ENCODE measurements at regions of chr10 and their contacts with region 1.

Region 1: DNA sequence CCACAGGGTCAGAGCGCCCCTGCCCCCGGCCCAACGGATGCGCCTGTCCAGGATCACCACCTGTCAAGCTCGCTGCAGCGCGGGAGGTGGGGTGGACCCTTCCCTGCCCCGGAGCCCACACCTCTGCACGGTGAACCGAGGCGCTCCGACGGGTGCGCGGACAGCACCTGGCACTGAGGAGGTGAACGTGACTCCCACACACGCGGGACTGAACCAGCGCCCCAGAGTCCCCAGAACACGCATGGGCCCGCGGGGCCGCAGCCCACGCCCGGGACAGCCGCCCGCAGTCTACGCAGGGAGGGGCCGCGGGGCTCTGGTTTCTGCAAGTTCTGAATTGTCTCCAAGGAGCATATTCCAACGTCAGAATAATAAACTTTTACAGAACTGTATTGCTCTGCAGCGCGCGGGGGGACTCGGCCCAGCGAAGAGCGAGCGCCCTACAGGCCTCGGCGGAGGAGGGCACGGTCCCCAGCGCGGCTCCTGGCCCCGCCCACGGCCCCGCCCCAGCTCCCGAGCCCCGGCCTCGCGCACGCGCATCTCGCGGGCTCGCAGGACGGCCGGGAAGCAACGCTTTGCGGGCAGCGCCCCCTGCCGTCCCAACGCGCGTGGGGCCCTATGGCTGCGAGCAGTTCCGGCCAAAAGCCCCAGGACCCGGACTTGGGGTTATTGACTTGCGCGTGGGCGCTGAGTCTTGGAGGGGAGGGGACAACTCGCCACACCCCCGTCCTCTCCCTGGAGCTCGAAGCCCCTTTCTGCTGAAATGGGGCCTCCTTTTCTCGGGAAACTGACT is 29.7 kb downstream of the OAT start:
- DNase-seq: peak; percentile 64 to 93
- H3K4me3 ChIP-seq: 0 out of 2 replicates have a peak overlapping the region, but pooled peaks have one; percentile 8
- H3K4me1 ChIP-seq: peaks cover 23% of the 10 kb centered on the region
- H3K27me3 ChIP-seq: 0 out of 2 replicates have a peak, but pooled peaks cover 2% of the 10 kb centered on the region

Region 2: DNA sequence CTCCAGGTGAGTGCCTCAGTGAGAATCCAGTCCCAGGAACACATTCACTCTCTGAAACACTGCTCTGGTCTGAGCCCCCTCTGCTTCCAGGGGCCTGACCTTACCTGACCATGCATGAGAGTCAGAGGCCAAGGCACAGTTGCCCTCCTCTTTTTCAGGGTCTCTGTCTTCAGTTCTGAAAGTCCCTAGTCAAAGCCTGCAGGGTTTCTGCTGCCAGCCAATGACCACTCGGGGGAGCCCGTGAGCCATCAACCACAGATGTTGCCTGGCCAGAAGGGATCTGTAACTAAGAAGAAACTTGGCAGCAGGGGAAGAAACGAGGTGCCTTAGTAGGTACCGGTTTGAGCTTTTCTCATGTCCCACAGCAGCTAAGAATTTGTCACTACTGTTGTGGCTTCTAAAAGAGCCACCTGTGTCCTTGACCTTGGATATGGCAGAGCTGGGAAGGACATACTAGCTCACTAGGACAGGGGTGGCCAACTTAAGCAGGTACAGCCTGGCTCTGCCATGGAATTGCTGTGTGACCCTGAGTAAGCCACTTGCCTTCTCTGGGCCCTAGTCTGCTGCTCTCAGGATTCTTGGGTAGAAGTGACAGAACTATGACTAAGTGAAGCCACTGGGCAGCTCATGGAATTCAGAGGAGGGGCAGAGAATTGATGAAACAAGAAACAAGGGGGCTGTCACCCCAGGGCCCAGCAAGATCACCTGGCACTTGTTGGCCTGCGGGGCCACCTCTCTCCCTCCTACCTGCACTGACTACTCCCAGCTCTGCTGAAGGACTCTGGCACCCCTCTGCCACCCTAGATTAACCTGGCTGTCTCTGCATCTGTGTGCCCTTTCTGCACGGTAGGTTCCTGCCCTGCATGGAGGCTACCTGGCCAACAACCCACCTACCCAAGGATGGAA is 806.7 kb before region 1 on chr10:
- in situ Hi-C with region 1: loop called (anchors 25 kb)
- DNase-seq: peak; percentile 31 to 85
- H3K4me3 ChIP-seq: no peak overlapping the region
- H3K4me1 ChIP-seq: peaks cover 7% of the 10 kb centered on the region; the same call in 1 of the 2 replicates
- H3K27me3 ChIP-seq: peaks cover 13% of the 10 kb centered on the region

Region 3: GRCh38 chr10:123994417-123995081 is 394.5 kb before region 1 on chr10:
- in situ Hi-C with region 1: loop called (anchors 5 kb)
- DNase-seq: peak; percentile 62 to 94
- H3K4me3 ChIP-seq: no peak overlapping the region
- H3K4me1 ChIP-seq: peaks cover 3% of the 10 kb centered on the region
- H3K27me3 ChIP-seq: no peaks in the 10 kb centered on the region